MCF 10A (cell line): ENCODE measurements at regions of chr16 and their contacts with region 1.

Region 1: DNA sequence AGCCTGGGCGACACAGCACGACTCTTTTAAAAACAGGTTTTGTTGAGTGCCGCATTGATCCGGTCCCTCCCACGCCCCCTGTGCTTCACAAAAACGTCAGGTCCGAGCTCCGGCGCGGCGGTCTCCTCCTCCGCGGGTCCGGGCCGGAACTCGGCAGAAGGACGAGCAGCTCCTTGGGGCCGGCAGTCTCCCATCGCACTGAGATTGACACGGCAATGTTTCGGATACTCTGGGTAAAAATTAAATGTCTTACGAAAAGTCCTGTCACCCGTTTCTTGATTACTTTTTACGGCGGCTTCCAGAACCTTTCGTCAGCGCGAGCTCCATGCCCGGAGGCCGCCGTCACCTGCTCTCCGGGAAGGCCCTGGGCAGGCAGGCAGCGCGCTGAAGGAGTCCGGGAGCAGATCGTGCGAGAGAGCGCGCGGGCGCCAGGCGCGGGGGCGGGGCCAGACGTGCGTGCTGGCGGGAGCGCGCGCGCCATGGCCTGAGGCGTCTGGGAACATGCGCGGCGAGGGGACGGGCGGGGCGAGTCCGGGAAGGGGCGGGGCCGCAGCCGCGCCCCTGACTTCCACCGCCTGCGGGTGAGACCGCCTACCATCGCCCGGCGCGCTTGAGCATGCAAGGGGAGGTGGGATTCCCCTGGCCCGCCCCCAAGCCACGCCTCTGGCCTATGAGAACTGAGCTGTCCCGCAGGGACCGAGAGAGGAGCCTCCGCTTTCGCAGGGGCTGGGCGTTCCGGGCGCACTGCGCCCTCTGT is 11.7 kb upstream of the SRL start:
- DNase-seq: peak; percentile 99
- H3K4me3 Mint-ChIP-seq: peak overlapping the region; percentile 90
- H3K27ac Mint-ChIP-seq: peak overlapping the region; percentile 98
- H3K4me1 Mint-ChIP-seq: no peaks in the 10 kb centered on the region
- H3K27me3 Mint-ChIP-seq: no peaks in the 10 kb centered on the region
- CTCF ChIP-seq: no peak

Region 2: DNA sequence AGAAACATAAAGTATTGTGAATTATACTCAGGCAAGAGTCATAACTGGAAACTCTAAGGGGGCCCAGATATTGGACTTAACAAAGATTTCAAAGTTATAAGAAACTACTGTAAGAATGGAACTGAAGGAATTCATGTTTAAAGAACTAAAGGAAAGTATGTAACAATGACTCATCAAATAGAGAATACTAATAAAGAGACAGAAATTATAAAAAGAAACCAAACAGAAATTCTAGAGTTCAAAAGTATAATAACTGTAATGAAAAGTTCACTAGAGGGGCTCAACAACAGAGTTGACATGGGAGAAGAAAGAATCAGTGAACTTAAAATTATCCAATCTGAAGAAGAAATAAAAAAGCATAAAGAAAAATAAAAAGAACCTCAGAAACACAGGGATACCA is 192.7 kb before region 1 on chr16:
- CTCF ChIA-PET with region 1: no interaction called
- POLR2A ChIA-PET with region 1: no interaction called
- intact Hi-C with region 1: no loop called
- DNase-seq: no peak
- H3K4me3 Mint-ChIP-seq: no peak overlapping the region
- H3K27ac Mint-ChIP-seq: no peak overlapping the region
- H3K4me1 Mint-ChIP-seq: peaks cover 4% of the 10 kb centered on the region
- H3K27me3 Mint-ChIP-seq: no peaks in the 10 kb centered on the region
- CTCF ChIP-seq: no peak

Region 3: DNA sequence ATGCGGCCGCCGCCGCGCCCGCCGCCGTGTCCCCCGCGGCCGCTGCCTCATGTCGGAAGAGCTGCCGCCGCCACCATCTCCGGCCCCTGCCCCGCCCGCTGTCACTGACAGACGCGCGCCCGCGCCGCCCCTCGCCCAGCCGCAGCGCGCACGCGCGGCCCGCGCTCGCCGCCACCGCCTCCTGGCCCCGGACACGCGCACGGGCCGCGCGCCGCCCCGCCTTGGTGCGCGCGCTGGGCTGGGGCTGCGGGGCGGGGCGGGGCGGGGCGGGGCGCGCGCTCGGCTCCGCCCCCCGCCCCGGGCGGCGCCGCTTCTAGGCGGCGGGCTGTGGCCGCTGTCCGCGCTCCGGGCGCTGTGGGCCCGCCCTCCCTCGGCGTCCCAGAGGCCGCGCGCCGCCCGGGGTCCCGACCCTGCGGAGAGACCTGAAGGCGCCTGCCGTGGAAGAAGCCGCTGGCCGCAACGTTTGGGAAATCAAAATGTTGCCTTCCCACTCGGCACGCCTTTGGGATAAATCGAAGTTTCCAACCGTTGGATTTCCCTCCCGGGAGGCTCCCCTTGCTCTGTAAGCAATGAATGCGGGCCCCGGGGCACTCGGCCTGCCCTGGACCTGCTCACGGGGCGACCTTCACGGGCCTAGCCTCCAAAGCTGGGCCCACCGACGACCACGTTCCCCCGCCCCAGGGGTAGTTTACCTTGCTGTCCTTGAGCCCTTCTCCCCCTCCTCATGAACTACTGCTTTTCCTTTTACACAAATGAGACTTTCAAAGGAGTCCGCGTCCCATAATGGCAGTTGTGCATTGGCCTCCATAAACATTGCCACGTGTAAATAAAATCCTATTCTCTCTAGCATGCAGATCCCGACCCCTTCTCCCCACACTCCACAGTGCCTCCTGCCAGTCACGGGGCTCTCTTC is 137.0 kb before region 1 on chr16 and contains the start of gene ADCY9:
- CTCF ChIA-PET with region 1: interaction called, 9 read pairs
- POLR2A ChIA-PET with region 1: interaction called, 10 read pairs
- intact Hi-C with region 1: loop called (anchors 5 kb)
- DNase-seq: peak; percentile 62
- H3K4me3 Mint-ChIP-seq: peak within 1 kb of the TSS; percentile 74
- H3K27ac Mint-ChIP-seq: peak within 1 kb of the TSS; percentile 65
- H3K4me1 Mint-ChIP-seq: peaks cover 26% of the 10 kb centered on the region
- H3K27me3 Mint-ChIP-seq: no peaks in the 10 kb centered on the region
- CTCF ChIP-seq: no peak
- total RNA-seq, gene ADCY9: 13.1 and 14.2 TPM in 2 replicates

Region 4: GRCh38 chr16:4176612-4177417 is 76.8 kb before region 1 on chr16:
- CTCF ChIA-PET with region 1: interaction called, 7 read pairs
- POLR2A ChIA-PET with region 1: interaction called, 29 read pairs
- intact Hi-C with region 1: no loop called
- DNase-seq: peak; percentile 77
- H3K4me3 Mint-ChIP-seq: no peak overlapping the region
- H3K27ac Mint-ChIP-seq: no peak overlapping the region
- H3K4me1 Mint-ChIP-seq: peaks cover 20% of the 10 kb centered on the region
- H3K27me3 Mint-ChIP-seq: no peaks in the 10 kb centered on the region
- CTCF ChIP-seq: no peak

Region 5: GRCh38 chr16:4194661-4195060 is 58.9 kb before region 1 on chr16:
- CTCF ChIA-PET with region 1: interaction called, 109 read pairs
- POLR2A ChIA-PET with region 1: interaction called, 30 read pairs
- intact Hi-C with region 1: no loop called
- DNase-seq: no peak
- H3K4me3 Mint-ChIP-seq: no peak overlapping the region
- H3K27ac Mint-ChIP-seq: no peak overlapping the region
- H3K4me1 Mint-ChIP-seq: no peaks in the 10 kb centered on the region
- H3K27me3 Mint-ChIP-seq: no peaks in the 10 kb centered on the region
- CTCF ChIP-seq: no peak

Region 6: GRCh38 chr16:4214215-4214621 is 39.4 kb before region 1 on chr16:
- CTCF ChIA-PET with region 1: interaction called, 14 read pairs
- POLR2A ChIA-PET with region 1: interaction called, 43 read pairs
- intact Hi-C with region 1: no loop called
- DNase-seq: peak; percentile 87
- H3K4me3 Mint-ChIP-seq: no peak overlapping the region
- H3K27ac Mint-ChIP-seq: peak overlapping the region; percentile 94
- H3K4me1 Mint-ChIP-seq: peaks cover 15% of the 10 kb centered on the region
- H3K27me3 Mint-ChIP-seq: no peaks in the 10 kb centered on the region
- CTCF ChIP-seq: no peak

Region 7: DNA sequence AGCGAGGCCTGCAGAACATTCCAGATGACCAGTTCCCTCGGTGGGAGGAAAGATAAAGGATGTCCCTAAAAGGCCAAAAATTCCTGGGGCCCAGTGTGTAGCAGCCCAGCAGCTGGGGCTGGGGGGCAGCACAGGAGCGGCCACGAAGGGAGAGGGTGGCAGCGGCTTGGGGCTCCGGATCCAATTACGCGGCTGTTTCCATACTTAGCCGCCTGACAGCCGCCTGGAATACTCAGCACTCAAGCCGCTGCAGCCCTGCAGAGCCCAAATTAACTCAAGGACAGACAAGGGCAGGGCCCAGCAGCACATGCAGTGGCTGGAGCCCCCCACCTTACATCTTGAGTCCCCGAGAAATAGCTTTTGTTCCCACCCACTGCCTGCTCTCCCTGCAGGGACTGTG is 12.9 kb before region 1 on chr16:
- CTCF ChIA-PET with region 1: interaction called, 13 read pairs
- POLR2A ChIA-PET with region 1: interaction called, 9 read pairs
- intact Hi-C with region 1: no loop called
- DNase-seq: no peak
- H3K4me3 Mint-ChIP-seq: no peak overlapping the region
- H3K27ac Mint-ChIP-seq: no peak overlapping the region
- H3K4me1 Mint-ChIP-seq: no peaks in the 10 kb centered on the region
- H3K27me3 Mint-ChIP-seq: no peaks in the 10 kb centered on the region
- CTCF ChIP-seq: no peak

Region 8: DNA sequence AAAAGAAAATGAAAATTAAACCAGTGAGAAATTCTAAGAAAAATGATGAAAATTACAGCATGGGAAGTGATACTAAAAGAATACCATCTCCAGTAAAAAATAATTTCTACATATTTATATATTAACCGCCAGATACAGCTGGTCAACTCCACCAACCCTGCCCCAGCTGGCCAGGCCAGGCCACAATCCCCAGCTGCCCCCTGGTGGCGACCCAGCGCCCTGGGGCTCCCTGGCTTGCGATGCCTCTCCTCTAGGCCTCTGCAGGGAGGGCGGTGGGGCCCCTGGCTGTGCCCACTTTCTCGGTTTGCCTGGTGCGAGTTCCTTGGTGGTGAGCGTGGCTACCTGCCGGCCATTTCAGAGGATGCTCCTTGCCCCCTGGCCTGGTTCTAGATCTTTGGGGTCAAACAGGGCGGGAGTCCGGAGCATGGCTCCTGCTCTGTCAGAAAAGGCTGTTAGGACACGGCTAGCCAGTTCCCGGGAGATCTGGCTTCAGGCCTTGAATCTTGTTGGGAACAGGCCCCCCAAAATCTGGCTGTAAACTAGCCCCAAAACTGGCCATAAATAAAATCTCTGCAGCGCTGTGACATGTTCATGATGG is 76.8 kb after region 1 on chr16:
- CTCF ChIA-PET with region 1: interaction called, 13 read pairs
- POLR2A ChIA-PET with region 1: interaction called, 6 read pairs
- intact Hi-C with region 1: loop called (anchors 5 kb)
- DNase-seq: peak; percentile 76
- H3K4me3 Mint-ChIP-seq: no peak overlapping the region
- H3K27ac Mint-ChIP-seq: no peak overlapping the region
- H3K4me1 Mint-ChIP-seq: no peaks in the 10 kb centered on the region
- H3K27me3 Mint-ChIP-seq: no peaks in the 10 kb centered on the region
- CTCF ChIP-seq: peak; percentile 98